Breast epithelium (tissue), 4 donors: ENCODE measurements at regions of chr20 and their contacts with region 1.

Region 1: GRCh38 chr20:38601216-38602184 is at the start of gene ARHGAP40:
- DNase-seq: peak; percentile 26 to 79
- H3K4me3 ChIP-seq: peak within 1 kb of the TSS in 2 of 3 donors; percentile 40 to 63
- H3K27ac ChIP-seq: peak within 1 kb of the TSS in 1 of 2 donors; percentile 79
- H3K4me1 ChIP-seq: no peaks in the 10 kb centered on the region
- H3K27me3 ChIP-seq: peaks cover 0 to 6% of the 10 kb centered on the region in 2 donors
- CTCF ChIP-seq: peak; percentile 21 to 46 (median 29)
- POLR2A ChIP-seq: no peak
- total RNA-seq, gene ARHGAP40: 33.8 to 35.9 TPM in 2 of 3 donors, not detected in the other

Region 2: GRCh38 chr20:38859070-38859690 is 257.7 kb after region 1 on chr20:
- intact Hi-C with region 1: loop called (anchors 5 kb)
- DNase-seq: no peak
- H3K4me3 ChIP-seq: no peak overlapping the region
- H3K27ac ChIP-seq: no peak overlapping the region
- H3K4me1 ChIP-seq: no peaks in the 10 kb centered on the region
- H3K27me3 ChIP-seq: no peaks in the 10 kb centered on the region
- CTCF ChIP-seq: no peak
- POLR2A ChIP-seq: no peak